Left lung (tissue), 14 donors: ENCODE measurements at regions of chr14 and their contacts with region 1.

Region 1: GRCh38 chr14:75800792-75801191 is 139.7 kb downstream of the TTLL5 start:
- DNase-seq: no peak
- ATAC-seq: no peak
- H3K4me3 ChIP-seq: no peak overlapping the region
- H3K27ac ChIP-seq: no peak overlapping the region
- H3K4me1 ChIP-seq: no peaks in the 10 kb centered on the region
- H3K27me3 ChIP-seq: no peaks in the 10 kb centered on the region
- CTCF ChIP-seq: no peak

Region 2: DNA sequence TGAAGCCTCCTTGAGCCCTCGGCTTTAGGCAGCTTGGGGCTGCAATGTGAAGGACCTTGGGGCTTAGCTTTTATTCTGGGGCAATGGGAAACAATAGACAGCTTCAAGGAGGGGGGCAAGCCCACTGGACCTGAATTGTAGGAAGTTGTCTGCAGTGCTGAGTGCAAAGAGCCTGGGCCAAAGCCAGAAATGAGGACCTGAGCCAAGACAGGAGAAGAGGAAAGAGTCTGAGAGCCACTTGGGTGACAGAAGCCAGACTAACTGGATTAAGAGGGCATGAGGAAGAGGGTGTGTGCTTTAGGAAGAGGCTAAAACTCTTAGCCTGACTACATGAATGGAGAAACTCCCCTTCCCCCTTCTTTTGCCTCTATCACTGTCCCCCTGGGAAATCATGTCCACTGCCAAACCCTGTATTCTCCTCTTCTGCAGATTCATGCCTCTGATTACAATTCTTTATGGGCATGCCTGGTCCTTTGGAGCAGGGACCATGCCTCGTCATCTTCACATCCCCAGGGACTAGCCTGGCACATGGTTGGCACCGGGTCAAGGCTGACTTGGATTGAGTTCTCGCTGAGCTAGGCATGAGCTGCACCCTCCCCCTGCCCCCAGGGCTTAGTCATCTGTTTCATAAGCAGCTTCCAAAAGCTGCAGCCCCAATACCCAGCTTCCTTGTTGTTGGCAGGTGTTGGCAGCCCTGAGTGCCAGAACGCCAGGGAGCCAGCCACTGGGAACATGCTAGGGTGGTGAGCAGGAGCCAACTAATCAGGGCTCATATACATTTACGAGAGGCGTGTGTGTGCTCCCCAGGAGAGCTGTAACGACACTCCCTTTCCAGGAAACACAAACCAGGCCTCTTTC is 400.7 kb before region 1 on chr14:
- intact Hi-C with region 1: no loop called
- DNase-seq: peak in 3 of 4 donors; percentile 55 to 91 (median 89)
- ATAC-seq: peak; percentile 88
- H3K4me3 ChIP-seq: no peak overlapping the region
- H3K27ac ChIP-seq: peak overlapping the region; percentile 61 to 70
- H3K4me1 ChIP-seq: peaks cover 15 to 25% of the 10 kb centered on the region in 2 donors
- H3K27me3 ChIP-seq: no peaks in the 10 kb centered on the region
- CTCF ChIP-seq: no peak

Region 3: GRCh38 chr14:75702616-75703261 is 98.1 kb before region 1 on chr14:
- intact Hi-C with region 1: no loop called
- DNase-seq: peak in 2 of 4 donors; percentile 61 to 71
- ATAC-seq: peak; percentile 41
- H3K4me3 ChIP-seq: no peak overlapping the region
- H3K27ac ChIP-seq: peak overlapping the region in 1 of 2 donors; percentile 56
- H3K4me1 ChIP-seq: peaks cover 0 to 7% of the 10 kb centered on the region in 2 donors
- H3K27me3 ChIP-seq: no peaks in the 10 kb centered on the region
- CTCF ChIP-seq: no peak

Region 4: GRCh38 chr14:75982266-75983018 is 181.7 kb after region 1 on chr14:
- intact Hi-C with region 1: loop called in 1 of 2 experiments (anchors 5 kb)
- DNase-seq: peak; percentile 86 to 92 (median 92)
- ATAC-seq: peak; percentile 77
- H3K4me3 ChIP-seq: peak overlapping the region; percentile 52 to 65
- H3K27ac ChIP-seq: peak overlapping the region; percentile 85 to 94
- H3K4me1 ChIP-seq: peaks cover 14 to 55% of the 10 kb centered on the region in 2 donors
- H3K27me3 ChIP-seq: no peaks in the 10 kb centered on the region
- CTCF ChIP-seq: peak; percentile 56